ENCODE measurements at regions of chr14 and their contacts with region 1.

Region 1: DNA sequence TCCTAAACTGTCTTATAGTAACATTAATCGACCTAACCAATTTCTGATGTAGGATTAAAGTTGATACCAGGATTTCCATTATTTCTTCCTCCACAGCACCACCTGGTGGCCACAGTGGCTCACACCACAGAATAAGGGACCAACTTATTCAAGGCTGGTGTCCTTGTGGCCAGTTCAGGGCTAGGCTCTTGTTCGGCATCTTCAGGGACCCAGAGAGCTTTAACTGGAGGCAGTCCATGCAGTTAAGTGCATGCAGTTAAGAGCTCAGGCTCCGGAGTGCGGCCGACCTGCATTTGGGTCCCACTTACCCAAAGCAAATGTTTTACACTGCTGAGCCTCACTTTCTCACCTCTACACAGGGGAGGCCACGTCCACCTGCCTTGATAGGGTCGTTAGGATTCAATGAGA is 42.0 kb upstream of the GPR68 start:
- DNase-seq: peak; percentile 78
- H3K4me3 Mint-ChIP-seq: no peak overlapping the region
- H3K27ac Mint-ChIP-seq: no peak overlapping the region
- H3K4me1 Mint-ChIP-seq: no peaks in the 10 kb centered on the region
- H3K27me3 Mint-ChIP-seq: no peaks in the 10 kb centered on the region
- CTCF ChIP-seq: peak; percentile 73

Region 2: GRCh38 chr14:90871605-90872233 is 414.8 kb before region 1 on chr14:
- CTCF ChIA-PET with region 1: no interaction called
- intact Hi-C with region 1: no loop called
- DNase-seq: no peak
- H3K4me3 Mint-ChIP-seq: no peak overlapping the region
- H3K27ac Mint-ChIP-seq: no peak overlapping the region
- H3K4me1 Mint-ChIP-seq: no peaks in the 10 kb centered on the region
- H3K27me3 Mint-ChIP-seq: no peaks in the 10 kb centered on the region
- CTCF ChIP-seq: no peak

Region 3: DNA sequence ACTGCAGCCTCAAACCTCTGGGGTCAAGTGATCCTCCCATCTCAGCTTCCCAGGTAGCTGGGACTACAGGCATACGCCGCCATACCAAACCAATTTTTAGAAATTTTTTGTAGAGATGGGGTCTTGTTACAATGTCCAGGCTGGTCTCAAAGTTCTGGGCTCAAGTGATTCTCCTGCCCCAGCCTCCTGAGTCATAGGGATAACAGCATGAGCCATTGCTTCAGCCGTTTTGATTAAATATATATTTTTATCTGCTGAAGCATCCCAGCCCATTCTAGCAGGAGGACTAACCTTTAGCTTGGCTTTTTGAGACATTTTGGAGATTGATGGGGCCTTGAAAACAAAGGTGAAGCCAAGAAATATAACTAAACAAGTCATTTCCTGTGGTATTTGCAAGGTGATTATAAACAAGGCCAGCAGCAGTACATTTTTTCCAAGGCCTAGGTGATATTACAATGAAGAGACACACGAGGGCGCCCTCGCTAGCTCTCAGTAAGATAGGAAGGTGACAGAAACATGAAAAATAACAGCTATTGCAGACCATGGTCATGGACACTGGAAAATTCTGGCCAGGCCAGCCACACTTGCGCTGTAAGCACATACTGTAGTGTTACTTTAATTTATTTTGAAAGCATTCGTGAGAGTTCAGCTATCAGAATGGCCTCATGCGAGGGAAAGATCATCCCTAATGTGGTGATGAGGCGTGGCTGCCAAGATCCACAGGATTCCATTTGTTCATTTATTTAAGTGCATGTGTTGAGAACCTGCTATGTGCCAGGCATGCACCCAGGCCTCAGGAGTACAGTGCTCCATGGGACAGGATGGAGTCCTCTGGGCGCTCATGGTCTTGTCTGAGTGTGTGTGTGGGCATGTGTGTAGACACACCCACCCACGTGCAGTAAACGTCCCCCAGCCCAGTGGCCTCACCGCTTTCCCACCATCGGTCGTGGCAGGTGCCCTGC is 109.2 kb before region 1 on chr14:
- CTCF ChIA-PET with region 1: interaction called, 7 read pairs
- intact Hi-C with region 1: loop called (anchors 1 kb)
- DNase-seq: peak; percentile 54
- H3K4me3 Mint-ChIP-seq: no peak overlapping the region
- H3K27ac Mint-ChIP-seq: no peak overlapping the region
- H3K4me1 Mint-ChIP-seq: no peaks in the 10 kb centered on the region
- H3K27me3 Mint-ChIP-seq: no peaks in the 10 kb centered on the region
- CTCF ChIP-seq: no peak

Region 4: GRCh38 chr14:91215401-91215800 is 71.1 kb before region 1 on chr14:
- CTCF ChIA-PET with region 1: no interaction called
- intact Hi-C with region 1: loop called (anchors 2 kb)
- DNase-seq: no peak
- H3K4me3 Mint-ChIP-seq: no peak overlapping the region
- H3K27ac Mint-ChIP-seq: no peak overlapping the region
- H3K4me1 Mint-ChIP-seq: no peaks in the 10 kb centered on the region
- H3K27me3 Mint-ChIP-seq: no peaks in the 10 kb centered on the region
- CTCF ChIP-seq: no peak

Region 5: GRCh38 chr14:91237219-91237618 is 49.3 kb before region 1 on chr14:
- CTCF ChIA-PET with region 1: no interaction called
- intact Hi-C with region 1: no loop called
- DNase-seq: no peak
- H3K4me3 Mint-ChIP-seq: no peak overlapping the region
- H3K27ac Mint-ChIP-seq: no peak overlapping the region
- H3K4me1 Mint-ChIP-seq: no peaks in the 10 kb centered on the region
- H3K27me3 Mint-ChIP-seq: peaks cover 35% of the 10 kb centered on the region
- CTCF ChIP-seq: no peak

Region 6: DNA sequence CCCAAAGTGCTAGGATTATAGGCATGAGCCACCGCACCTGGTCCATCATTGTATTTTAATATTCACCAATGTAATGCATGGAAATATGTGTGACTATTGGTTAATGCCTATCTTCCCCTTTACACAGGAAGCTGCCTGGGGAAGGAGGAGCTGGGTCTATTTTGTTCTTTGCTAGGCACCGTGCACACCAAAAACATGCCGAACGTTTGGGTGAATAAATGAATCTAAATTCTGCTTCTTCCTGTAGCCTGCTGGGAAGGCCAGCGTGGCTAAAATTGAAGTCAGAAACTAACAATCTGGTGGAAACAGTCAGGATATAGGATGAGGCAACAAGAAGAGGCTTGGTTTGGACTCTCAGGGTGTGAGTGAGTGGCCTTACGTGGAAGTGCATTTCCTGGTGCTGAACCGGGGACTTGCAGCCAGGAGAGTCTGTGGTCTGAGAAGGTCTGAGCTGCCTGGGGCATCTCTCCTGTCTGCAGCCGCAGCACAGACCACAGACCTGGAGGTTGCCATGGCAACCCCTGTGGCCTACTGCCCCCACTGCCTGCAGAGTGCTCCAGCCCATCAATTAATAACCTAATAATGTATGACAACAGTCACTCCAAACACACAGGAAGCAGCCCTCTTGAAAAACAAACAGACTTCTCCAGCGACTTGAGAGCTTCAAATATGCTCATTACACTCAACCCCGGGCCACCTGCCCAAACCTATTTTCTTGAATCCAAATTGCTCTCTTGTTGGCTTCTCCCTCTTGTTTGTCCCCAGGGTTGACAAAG is 36.5 kb before region 1 on chr14:
- CTCF ChIA-PET with region 1: no interaction called
- intact Hi-C with region 1: no loop called
- DNase-seq: peak; percentile 77
- H3K4me3 Mint-ChIP-seq: no peak overlapping the region
- H3K27ac Mint-ChIP-seq: peak overlapping the region; percentile 20
- H3K4me1 Mint-ChIP-seq: peaks cover 16% of the 10 kb centered on the region
- H3K27me3 Mint-ChIP-seq: no peaks in the 10 kb centered on the region
- CTCF ChIP-seq: no peak

Region 7: DNA sequence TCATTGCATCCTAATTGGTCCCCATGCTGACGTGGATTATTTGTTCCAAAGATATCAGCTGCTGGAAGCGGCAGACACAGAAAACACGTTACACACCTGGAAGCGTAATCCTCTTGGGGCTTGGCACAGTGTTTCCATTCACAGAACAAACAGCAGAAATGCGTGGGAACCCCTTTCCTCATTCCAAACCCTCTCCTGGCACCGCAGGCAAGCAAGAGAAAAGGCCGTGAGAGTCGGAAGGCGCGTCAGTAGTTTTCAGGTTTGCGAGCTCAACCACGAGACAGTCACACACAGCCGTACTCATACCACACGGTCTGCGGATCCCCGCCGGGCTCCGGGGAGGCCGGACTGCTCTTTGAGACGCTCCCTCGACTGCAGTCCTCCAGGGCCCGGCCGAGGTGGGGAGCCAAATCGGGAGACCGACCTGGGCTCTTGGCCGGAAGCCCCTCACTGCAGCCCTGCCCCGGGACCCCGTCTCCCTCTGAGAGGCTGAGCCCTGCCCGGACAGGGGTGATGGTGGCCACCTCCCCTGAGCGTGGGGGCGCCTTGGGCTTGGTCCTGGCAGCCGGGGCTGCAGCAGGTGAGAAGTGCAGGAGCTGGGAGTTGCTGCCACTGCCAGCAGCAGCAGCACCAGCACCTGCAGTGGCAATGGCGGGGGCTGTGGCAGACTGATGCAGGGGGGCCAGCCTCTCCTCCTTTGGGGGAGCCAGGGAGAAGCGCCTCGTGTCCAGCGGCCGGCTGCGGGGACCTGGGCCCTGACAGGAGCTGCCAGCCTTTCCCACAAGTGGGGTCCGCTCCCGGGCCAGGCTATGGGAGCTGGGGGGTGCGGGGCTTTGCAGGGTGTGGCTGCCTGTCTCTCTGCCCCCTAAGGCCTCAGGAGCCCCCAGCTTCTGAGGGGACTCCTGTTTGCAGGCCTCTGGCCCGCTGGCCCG is 13.9 kb before region 1 on chr14:
- CTCF ChIA-PET with region 1: no interaction called
- intact Hi-C with region 1: no loop called
- DNase-seq: no peak
- H3K4me3 Mint-ChIP-seq: no peak overlapping the region
- H3K27ac Mint-ChIP-seq: no peak overlapping the region
- H3K4me1 Mint-ChIP-seq: no peaks in the 10 kb centered on the region
- H3K27me3 Mint-ChIP-seq: no peaks in the 10 kb centered on the region
- CTCF ChIP-seq: no peak